ENCODE measurements at regions of chr10 and their contacts with region 1.

Region 1: GRCh38 chr10:100508691-100509150 is 10.9 kb downstream of the SEC31B start:
- DNase-seq: peak in 8 of 10 donors; percentile 30 to 80 (median 66)
- ATAC-seq: peak; percentile 46 to 61
- H3K4me3 Mint-ChIP-seq: peak overlapping the region; percentile 50 to 82 (median 66)
- H3K27ac Mint-ChIP-seq: peak overlapping the region; percentile 47 to 100 (median 90)
- H3K4me1 Mint-ChIP-seq: peaks cover 40 to 87% (median 78%) of the 10 kb centered on the region in 4 donors
- H3K27me3 Mint-ChIP-seq: no peaks in the 10 kb centered on the region

Region 2: DNA sequence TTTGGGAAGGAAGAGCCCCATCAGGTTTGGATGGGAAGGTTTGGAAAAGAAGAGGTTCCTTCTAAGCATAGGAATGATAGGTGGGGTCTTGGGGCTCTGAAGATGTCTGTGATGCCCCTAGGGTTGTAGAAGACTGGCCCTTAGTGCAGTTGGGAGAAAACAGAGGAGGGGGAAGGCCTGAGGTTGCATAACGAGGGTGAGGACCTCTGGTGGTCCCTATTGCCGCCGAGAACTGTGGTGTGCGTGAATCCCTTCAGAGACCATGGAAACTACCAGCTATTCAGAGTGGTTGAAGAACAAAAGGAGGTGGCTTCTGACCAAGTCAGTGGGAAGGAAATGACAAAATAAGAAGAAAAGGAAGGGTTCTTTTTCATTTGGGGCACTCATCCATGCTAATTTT is 175.6 kb before region 1 on chr10:
- POLR2A ChIA-PET with region 1: interaction called, 11 read pairs
- DNase-seq: no peak
- ATAC-seq: no peak
- H3K4me3 Mint-ChIP-seq: no peak overlapping the region
- H3K27ac Mint-ChIP-seq: no peak overlapping the region
- H3K4me1 Mint-ChIP-seq: peaks cover 0 to 3% (median under 1%) of the 10 kb centered on the region in 4 donors
- H3K27me3 Mint-ChIP-seq: peaks cover 1 to 21% (median 16%) of the 10 kb centered on the region in 5 donors

Region 3: DNA sequence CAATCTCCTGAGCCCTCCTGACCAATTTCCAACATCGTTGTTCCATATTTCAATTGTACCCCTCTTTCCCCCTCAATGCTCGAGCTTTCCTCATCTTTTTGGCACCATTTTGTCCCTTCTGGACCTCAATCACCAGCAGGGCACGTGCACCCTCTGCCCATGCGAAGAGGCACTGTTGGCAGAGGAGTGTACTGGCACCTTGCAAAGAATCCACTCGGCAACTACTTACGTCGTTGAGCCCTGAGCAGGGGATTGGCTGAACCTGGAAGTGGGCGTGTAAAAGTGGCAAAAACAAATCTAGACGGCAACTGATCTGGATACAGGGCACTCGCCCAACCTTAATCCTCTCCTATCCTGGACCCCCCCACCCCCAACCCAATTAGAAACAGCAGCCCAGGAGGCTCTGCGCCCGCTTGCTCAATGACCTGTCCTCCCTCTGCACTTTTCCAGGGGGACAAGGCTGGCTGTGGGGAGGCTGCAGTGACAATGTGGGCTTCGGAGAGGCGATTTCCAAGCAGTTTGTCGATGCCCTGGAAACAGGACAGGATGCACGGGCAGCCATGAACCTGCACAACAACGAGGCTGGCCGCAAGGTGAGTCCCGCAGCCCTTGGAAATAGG is 27.1 kb before region 1 on chr10:
- POLR2A ChIA-PET with region 1: interaction called, 18 read pairs
- DNase-seq: peak; percentile 67 to 99 (median 92)
- ATAC-seq: peak; percentile 92 to 95
- H3K4me3 Mint-ChIP-seq: peak overlapping the region; percentile 73 to 90 (median 86)
- H3K27ac Mint-ChIP-seq: peak overlapping the region in 7 of 10 donors; percentile 40 to 87 (median 71)
- H3K4me1 Mint-ChIP-seq: peaks cover 11 to 26% (median 18%) of the 10 kb centered on the region in 4 donors
- H3K27me3 Mint-ChIP-seq: peaks cover 11 to 30% (median 16%) of the 10 kb centered on the region in 5 donors

Region 4: DNA sequence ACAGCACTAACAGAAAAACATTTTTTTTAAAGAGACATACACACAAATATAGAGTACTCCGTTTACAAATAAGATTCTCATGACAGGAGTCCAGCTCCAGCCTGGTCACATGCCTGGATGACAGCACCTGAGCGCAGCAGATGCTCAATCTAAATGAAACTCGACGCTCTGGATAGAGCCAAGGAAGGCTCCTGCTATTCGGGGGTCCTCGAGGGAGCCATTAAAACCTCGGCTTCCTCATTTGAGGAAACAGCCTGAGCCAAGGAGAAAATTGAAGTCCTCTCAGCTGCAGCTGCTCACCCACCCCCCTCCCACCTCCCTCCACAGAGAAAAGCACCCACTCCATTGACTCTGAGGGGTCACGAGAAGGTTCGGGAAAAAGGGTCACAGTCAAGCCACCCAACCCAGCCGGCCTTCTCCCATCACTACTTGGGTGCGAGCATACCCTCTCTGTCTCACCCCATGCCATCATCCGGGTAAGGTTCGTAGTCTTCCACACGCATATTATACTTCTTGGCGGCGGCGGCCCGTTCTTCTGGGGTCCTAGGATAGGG is 20.3 kb after region 1 on chr10:
- POLR2A ChIA-PET with region 1: interaction called, 10 read pairs
- DNase-seq: peak in 1 of 10 donors; percentile 9
- ATAC-seq: peak in 1 of 2 donors; percentile 9
- H3K4me3 Mint-ChIP-seq: peak overlapping the region; percentile 92 to 100 (median 100)
- H3K27ac Mint-ChIP-seq: peak overlapping the region; percentile 92 to 100 (median 99)
- H3K4me1 Mint-ChIP-seq: peaks cover 13 to 52% (median 37%) of the 10 kb centered on the region in 4 donors
- H3K27me3 Mint-ChIP-seq: no peaks in the 10 kb centered on the region

Measured in naive thymus-derived CD8-positive, alpha-beta T cell (primary cell).